Calu3 (cell line): ENCODE measurements at regions of chr11 and their contacts with region 1.

Region 1: GRCh38 chr11:68106165-68106957 is 14.8 kb downstream of the CHKA start:
- DNase-seq: peak; percentile 78
- H3K4me3 Mint-ChIP-seq: peak overlapping the region; percentile 50
- H3K27ac Mint-ChIP-seq: peak overlapping the region; percentile 78
- H3K4me1 Mint-ChIP-seq: peaks cover 51% of the 10 kb centered on the region
- H3K27me3 Mint-ChIP-seq: no peaks in the 10 kb centered on the region
- CTCF ChIP-seq: no peak

Region 2: DNA sequence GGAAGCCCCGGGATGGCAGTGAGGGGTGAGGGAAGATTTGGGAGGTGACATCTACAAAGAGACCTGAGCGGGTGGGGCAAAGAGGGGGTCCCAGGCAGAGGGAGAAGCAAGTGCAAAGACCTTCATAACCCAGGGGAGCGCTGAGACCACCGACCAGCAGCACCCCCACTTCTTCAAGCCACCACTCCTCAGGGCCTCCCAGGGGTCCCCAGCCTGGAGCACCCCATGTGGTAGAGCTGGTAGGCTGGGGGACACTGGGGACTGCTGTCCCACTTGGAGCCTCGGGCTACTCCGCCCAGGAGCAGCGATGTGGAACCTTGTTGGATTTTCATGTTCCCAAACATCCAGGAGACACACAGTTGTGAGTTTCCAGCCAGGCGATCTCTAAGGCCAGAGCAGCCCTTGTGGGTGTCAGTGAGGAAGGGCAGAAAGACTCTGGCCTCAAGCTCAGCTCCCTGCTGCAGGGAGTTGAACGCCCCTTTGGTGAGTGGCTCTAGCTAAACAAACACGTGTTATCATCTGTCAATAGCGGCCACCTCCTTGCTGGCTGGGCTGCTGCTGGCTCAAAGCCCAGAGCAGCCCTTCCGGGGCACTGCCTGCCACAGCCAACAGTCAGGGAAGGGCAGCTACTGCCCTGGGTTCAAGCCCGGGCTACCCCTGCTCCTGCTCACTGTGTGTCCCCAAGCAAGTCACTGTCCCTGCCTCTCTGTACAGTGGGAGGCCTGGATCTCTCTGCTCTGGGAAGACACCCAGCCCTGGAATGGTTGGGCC is 40.5 kb after region 1 on chr11:
- CTCF ChIA-PET with region 1: interaction called, 14 read pairs
- intact Hi-C with region 1: loop called (anchors 5 kb)
- DNase-seq: peak; percentile 85
- H3K4me3 Mint-ChIP-seq: peak overlapping the region; percentile 29
- H3K27ac Mint-ChIP-seq: peak overlapping the region; percentile 90
- H3K4me1 Mint-ChIP-seq: peaks cover 43% of the 10 kb centered on the region
- H3K27me3 Mint-ChIP-seq: no peaks in the 10 kb centered on the region
- CTCF ChIP-seq: no peak

Region 3: GRCh38 chr11:68213555-68214174 is 107.3 kb after region 1 on chr11:
- CTCF ChIA-PET with region 1: interaction called, 14 read pairs
- intact Hi-C with region 1: loop called (anchors 5 kb)
- DNase-seq: peak; percentile 89
- H3K4me3 Mint-ChIP-seq: peak overlapping the region; percentile 91
- H3K27ac Mint-ChIP-seq: peak overlapping the region; percentile 63
- H3K4me1 Mint-ChIP-seq: peaks cover 56% of the 10 kb centered on the region
- H3K27me3 Mint-ChIP-seq: peaks cover 15% of the 10 kb centered on the region
- CTCF ChIP-seq: no peak

Region 4: GRCh38 chr11:68370211-68371111 is 264.1 kb after region 1 on chr11:
- CTCF ChIA-PET with region 1: no interaction called
- intact Hi-C with region 1: no loop called
- DNase-seq: no peak
- H3K4me3 Mint-ChIP-seq: no peak overlapping the region
- H3K27ac Mint-ChIP-seq: no peak overlapping the region
- H3K4me1 Mint-ChIP-seq: peaks cover 9% of the 10 kb centered on the region
- H3K27me3 Mint-ChIP-seq: no peaks in the 10 kb centered on the region
- CTCF ChIP-seq: no peak

Region 5: DNA sequence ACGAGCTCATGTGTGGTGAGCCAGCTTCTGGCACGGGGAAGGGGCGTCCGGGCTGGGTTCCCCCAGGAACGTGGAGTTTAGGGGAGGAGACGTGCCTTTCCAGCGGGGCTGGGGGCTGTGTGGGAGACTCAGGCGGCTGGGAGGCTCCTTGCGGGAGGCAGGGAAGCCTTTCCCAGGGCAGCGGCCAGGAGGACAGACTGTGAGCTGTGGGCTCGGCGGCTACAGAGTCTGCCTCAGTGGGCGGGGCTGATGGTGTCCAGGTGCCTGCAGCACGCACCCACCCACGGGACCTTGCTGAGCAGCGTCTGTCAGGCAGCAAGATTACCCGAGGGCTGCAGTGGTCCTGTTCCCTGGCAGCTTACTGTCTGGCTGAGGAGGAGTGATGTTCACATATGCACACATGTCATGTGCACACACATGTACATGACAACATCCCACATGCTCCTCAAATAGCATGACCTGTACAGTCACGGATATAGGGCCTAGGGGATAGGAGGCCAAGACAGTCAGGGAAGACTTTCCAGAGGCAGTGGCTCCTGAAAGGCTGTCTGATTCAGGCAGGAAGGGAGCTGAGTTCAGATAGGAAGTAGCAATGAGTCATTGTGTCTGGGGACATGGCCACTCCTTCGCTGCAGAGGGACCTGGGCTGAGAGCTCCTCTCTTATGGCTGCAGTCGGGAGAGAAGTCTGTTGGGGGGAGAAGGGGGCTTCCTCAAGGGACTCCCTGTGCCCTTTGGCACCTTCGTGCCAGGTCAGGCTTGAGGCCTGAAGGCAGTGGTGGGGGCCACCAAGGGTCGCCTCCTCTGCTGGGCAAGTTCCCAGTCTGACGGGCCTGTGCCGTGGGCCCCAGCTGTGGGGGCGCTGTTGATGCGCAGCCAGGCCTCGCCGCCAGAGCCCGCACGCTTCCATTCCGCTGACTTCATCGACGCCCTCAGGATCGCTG is 330.9 kb after region 1 on chr11:
- CTCF ChIA-PET with region 1: no interaction called
- intact Hi-C with region 1: no loop called
- DNase-seq: peak; percentile 17
- H3K4me3 Mint-ChIP-seq: no peak overlapping the region
- H3K27ac Mint-ChIP-seq: peak overlapping the region; percentile 13
- H3K4me1 Mint-ChIP-seq: no peaks in the 10 kb centered on the region
- H3K27me3 Mint-ChIP-seq: no peaks in the 10 kb centered on the region
- CTCF ChIP-seq: no peak